Endothelial cell of umbilical vein (primary cell): ENCODE measurements at regions of chr12 and their contacts with region 1.

Region 1: DNA sequence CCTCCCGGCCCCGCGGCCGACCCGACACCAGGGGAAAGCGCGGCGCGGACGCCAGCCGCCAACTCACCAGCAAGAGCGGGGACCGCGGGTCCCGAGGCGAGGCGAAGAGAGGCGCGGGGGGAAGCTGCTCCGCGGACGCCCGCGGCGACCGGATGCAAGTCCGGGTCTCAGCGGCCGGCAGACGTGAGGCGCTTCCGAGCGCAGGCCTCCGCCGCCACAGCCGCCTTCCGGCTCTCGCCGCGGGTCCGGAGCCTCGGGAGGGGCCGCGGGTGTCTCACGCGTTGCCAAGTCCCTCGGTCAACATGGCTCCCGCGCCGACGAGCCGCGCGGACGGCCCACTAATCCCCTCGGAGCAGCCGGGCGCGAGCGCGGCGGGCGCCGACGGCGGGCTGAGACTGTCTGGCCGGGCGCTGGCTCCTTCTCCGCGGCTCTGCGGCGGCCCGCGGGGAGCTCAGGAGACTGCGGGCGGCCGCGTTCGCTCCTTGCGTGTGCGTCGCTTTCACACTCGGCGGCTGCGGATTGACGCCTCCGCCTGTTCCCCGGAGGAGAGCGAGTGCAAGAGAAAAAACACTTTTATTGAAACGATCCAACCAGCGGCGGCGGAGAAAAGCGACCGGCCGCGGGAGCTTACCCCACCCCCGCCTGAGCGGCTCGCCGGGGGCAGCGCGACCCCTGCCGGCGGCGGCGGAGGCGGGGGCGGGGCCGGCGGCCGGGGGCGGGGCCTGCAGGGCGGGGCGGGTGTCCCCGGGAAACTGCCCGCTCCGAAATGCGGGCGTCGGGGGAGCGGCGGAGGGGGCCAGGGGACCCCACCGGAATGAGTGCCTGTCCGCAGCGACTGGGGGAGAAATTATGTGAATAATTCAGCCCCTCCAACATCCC is at the start of gene CDK17:
- DNase-seq: peak; percentile 83
- H3K4me3 ChIP-seq: peak within 1 kb of the TSS; percentile 77 to 98 (median 80)
- H3K27ac ChIP-seq: peak within 1 kb of the TSS; percentile 99
- H3K4me1 ChIP-seq: peaks cover 42% of the 10 kb centered on the region
- H3K27me3 ChIP-seq: no peaks in the 10 kb centered on the region
- CTCF ChIP-seq: peak in 1 of 2 donors; percentile 42
- POLR2A ChIP-seq: peak; percentile 64
- total RNA-seq, gene CDK17: 176 and 193 TPM in 2 replicates

Region 2: DNA sequence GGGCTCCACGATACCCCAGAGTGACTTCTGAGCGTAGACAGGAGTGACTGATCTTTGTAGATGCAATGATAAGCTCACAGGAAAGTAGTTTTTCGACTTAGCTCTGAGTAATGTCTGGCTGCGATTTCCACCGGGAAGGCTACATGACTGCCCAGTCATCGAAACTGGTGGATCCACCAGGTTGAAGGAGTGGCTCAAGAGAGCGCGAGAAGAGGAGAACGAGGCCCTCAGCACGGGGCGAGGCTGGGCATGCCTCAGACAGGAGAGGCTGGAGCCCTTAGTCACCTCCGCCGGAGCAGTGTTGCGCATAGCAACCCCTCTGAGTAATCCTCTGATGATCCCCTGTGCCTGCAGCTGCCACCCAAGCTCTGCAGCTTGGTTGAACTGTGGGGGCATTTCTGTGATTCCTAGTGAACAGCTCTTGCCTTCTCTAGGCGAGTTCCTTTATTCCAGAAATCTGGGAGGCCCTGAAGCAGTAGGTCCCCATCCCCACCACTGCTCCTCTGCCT is 180.4 kb before region 1 on chr12:
- CTCF ChIA-PET with region 1: interaction called, 7 read pairs
- POLR2A ChIA-PET with region 1: no interaction called
- dilution Hi-C with region 1: no loop called
- intact Hi-C with region 1: loop called (anchors 5 kb)
- DNase-seq: peak; percentile 96
- H3K4me3 ChIP-seq: no peak overlapping the region
- H3K27ac ChIP-seq: peak overlapping the region; percentile 90
- H3K4me1 ChIP-seq: peaks cover 93% of the 10 kb centered on the region
- H3K27me3 ChIP-seq: no peaks in the 10 kb centered on the region
- CTCF ChIP-seq: no peak
- POLR2A ChIP-seq: peak; percentile 63

Region 3: GRCh38 chr12:96294831-96295230 is 105.3 kb before region 1 on chr12:
- CTCF ChIA-PET with region 1: interaction called, 3 read pairs
- POLR2A ChIA-PET with region 1: no interaction called
- dilution Hi-C with region 1: no loop called
- intact Hi-C with region 1: loop called (anchors 5 kb)
- DNase-seq: no peak
- H3K4me3 ChIP-seq: no peak overlapping the region
- H3K27ac ChIP-seq: no peak overlapping the region
- H3K4me1 ChIP-seq: no peaks in the 10 kb centered on the region
- H3K27me3 ChIP-seq: no peaks in the 10 kb centered on the region
- CTCF ChIP-seq: no peak
- POLR2A ChIP-seq: no peak

Region 4: DNA sequence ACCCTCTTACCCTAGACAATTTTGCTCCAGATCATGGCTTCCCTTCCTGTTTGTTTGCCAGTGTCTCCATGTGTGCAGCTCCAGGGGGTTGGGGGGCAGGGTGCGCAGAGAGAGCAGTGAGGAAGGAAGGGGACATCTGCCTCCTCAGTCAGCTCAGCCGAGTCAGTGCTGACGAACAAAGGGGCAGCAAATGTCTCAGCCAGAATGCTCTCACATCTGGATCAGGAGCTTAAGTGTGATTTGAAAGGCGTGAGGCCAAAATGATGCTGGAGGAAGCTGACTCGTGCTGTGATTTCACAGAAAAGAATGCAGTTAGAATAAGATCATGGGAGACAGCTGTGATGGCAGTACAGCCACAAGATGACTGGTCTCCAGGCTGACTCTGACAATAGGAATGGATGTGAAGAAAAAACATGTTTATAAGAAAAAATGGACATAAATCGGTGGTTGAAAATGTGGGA is 27.1 kb after region 1 on chr12:
- CTCF ChIA-PET with region 1: interaction called, 20 read pairs
- POLR2A ChIA-PET with region 1: interaction called, 23 read pairs
- dilution Hi-C with region 1: no loop called
- intact Hi-C with region 1: loop called (anchors 1 kb)
- DNase-seq: peak; percentile 99
- H3K4me3 ChIP-seq: peak overlapping the region in 2 of 3 experiments; percentile 3 to 47
- H3K27ac ChIP-seq: peak overlapping the region; percentile 99
- H3K4me1 ChIP-seq: peaks cover 56% of the 10 kb centered on the region
- H3K27me3 ChIP-seq: no peaks in the 10 kb centered on the region
- CTCF ChIP-seq: no peak
- POLR2A ChIP-seq: no peak

Region 5: DNA sequence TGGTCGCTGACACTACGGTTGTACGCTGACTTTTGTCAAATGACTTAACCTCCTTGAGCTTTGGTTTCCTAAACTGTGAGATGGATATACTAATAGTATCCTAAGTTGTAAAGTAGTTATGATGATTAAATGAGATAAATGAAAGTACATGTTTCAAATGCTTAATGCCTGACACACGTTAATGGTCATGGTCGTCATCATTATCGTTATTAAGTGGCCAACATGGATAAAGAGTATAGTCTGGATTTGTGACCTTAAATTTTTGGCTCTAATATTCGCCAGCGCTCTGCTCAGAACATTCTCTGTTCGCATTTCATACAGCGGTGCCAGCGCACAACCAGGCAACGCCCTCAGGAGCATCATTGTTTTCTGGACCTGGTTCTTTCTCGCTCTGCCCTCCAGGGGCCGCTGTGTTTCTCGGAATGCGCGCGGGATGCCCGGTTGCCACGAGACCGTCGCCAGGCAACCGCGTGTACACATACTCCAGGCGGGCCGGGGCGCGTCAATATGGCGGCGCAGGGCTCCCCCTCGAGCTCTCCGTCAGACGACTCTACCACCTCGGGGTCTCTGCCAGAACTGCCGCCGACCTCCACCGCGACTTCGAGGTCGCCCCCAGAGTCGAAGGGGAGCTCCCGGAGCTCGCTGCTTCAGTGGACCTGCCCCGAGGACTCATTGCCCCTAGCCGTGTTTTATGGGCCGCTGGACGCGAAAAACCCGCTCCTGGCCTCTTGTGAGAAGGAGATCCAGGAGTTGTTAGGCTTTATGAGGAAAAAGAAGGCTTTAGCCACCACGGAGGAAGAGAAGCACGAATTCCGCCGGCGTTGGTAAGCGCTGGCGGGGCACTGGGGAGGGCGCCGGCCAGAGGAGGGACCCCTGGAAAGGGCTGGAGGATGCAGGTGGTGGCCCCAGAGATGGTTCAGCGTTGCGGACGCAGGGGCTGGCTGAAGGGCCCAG is 89.2 kb after region 1 on chr12 and contains the start of gene CFAP54:
- CTCF ChIA-PET with region 1: interaction called, 9 read pairs
- POLR2A ChIA-PET with region 1: interaction called, 3 read pairs
- dilution Hi-C with region 1: no loop called
- intact Hi-C with region 1: loop called (anchors 1 kb)
- DNase-seq: peak; percentile 96
- H3K4me3 ChIP-seq: peak within 1 kb of the TSS; percentile 30 to 66 (median 53)
- H3K27ac ChIP-seq: peak within 1 kb of the TSS; percentile 88
- H3K4me1 ChIP-seq: peaks cover 57% of the 10 kb centered on the region
- H3K27me3 ChIP-seq: no peaks in the 10 kb centered on the region
- CTCF ChIP-seq: peak; percentile 92
- POLR2A ChIP-seq: no peak
- total RNA-seq, gene CFAP54: 21.5 and 26.9 TPM in 2 replicates

Region 6: DNA sequence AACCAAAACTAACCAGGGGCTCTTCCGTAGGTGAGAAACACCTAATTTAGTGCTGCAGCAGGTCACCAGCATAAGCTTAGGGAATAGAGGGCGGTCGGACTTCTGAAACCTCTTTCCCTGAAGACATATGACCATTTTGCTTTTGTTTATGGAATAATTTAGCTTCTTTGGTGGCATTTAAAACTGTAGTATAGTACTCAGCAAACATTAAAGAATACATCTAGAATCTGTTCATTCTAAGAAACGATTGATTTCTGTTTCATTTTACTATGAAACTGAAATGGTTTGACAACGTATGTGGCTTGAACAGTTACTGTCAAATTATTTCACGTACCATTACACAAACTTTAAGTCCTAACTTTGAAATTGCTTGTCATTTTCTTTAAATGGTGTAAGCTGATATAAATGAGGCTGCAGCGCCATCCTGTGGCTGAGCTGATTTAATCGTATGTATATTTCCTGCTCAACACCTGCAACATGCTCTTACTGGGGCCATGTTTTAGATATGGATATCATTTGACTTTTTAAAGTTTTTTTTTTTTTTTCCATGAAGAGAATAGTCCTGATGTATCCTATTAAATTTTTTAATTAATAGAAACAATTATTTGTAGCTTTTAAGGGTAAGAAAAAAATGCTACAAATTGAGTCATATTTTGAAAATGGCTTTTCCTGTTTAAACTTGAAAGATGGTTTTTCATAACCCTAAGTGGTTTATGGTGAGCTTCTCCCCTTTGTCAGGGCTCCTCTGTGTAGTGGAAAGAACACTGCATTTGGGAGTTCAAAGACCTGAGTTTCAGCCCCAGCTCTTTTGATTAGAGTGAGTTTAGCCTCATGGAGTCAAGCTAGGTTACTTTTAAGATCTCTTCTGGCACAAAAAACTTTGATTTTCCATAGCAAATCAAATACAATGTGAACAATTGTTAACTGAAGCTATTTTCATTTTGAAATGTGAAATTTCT is 116.6 kb after region 1 on chr12:
- CTCF ChIA-PET with region 1: interaction called, 66 read pairs
- POLR2A ChIA-PET with region 1: interaction called, 4 read pairs
- dilution Hi-C with region 1: no loop called
- intact Hi-C with region 1: loop called (anchors 1 kb)
- DNase-seq: peak; percentile 94
- H3K4me3 ChIP-seq: no peak overlapping the region
- H3K27ac ChIP-seq: peak overlapping the region; percentile 69
- H3K4me1 ChIP-seq: peaks cover 16% of the 10 kb centered on the region
- H3K27me3 ChIP-seq: no peaks in the 10 kb centered on the region
- CTCF ChIP-seq: peak; percentile 29 to 35
- POLR2A ChIP-seq: no peak